PC-3 (cell line): ENCODE measurements at regions of chr10 and their contacts with region 1.

Region 1: DNA sequence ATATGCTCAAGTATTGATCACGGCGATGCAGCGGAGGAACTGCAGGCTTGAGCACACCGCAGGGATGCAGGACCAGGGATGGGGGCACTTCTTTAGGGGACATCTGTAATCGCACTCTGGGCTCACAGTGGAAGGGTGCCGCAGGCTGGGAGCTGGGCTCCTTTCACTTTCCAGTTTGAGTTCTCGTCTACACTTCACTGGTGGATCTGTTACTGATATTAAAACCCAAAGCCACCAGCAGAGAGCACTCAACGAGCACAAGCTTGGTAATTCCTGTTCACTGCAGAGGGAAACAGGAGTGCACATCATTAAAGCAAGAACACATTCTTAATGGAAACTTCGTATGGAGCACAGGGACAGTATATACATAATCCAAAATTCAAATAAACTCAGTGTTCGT is 91.3 kb downstream of the PARD3 start:
- DNase-seq: peak; percentile 96
- ATAC-seq: peak; percentile 70
- H3K4me3 ChIP-seq: peak overlapping the region; percentile 38
- H3K27ac ChIP-seq: no peak overlapping the region
- H3K4me1 ChIP-seq: peaks cover 52% of the 10 kb centered on the region
- H3K27me3 ChIP-seq: no peaks in the 10 kb centered on the region
- CTCF ChIP-seq: peak; percentile 99

Region 2: DNA sequence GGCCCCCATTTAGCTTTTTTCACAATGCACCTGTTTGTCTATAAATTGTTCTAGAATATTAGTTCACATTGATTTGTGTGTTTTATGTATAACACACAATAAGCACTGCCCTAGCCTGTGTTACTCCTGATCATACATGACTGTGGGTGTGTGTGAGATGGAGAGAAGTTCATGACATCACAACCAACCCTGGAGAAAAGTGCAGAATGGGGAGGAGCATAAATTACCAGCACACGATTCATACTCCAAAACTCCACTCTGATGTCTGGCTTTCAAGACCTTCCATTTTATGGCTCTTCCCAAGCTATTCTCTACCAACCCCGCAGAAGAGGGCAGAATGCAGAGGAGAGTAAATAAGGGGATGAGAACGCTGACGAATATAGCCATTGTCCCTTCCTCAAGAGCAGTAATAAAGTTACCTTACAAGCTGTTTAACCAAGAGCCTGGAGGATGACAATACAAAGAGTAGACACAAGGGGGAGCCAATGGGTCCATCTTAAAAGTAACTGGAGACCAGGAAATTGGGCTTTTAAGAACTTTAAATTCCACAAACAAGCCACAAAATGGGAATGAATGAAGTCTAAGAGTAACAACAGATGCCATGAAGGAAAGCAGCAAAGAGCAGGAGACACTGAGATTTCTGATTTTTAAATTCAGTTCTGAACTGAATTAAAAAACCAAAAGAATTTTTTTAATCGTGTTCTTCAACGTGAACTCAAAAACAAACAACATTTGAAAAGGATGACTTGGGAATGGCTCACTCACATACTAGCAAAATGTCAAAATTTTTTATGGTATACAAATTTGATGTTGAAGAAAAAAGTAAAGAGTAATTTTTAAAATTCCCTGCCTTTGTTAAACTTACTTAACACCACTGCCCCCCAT is 68.2 kb before region 1 on chr10:
- CTCF ChIA-PET with region 1: interaction called, 12 read pairs
- POLR2A ChIA-PET with region 1: no interaction called
- intact Hi-C with region 1: no loop called
- DNase-seq: peak; percentile 100
- ATAC-seq: peak; percentile 78
- H3K4me3 ChIP-seq: no peak overlapping the region
- H3K27ac ChIP-seq: no peak overlapping the region
- H3K4me1 ChIP-seq: peaks cover 9% of the 10 kb centered on the region; the same call in 1 of the 2 replicates
- H3K27me3 ChIP-seq: no peaks in the 10 kb centered on the region
- CTCF ChIP-seq: peak; percentile 100

Region 3: GRCh38 chr10:34696423-34696822 is 27.3 kb before region 1 on chr10:
- CTCF ChIA-PET with region 1: interaction called, 3 read pairs
- POLR2A ChIA-PET with region 1: interaction called, 5 read pairs
- intact Hi-C with region 1: loop called (anchors 1 kb)
- DNase-seq: peak; percentile 99
- ATAC-seq: peak; percentile 74
- H3K4me3 ChIP-seq: no peak overlapping the region
- H3K27ac ChIP-seq: peak overlapping the region; percentile 0; the same call in 1 of the 2 replicates
- H3K4me1 ChIP-seq: peaks cover 57% of the 10 kb centered on the region
- H3K27me3 ChIP-seq: no peaks in the 10 kb centered on the region
- CTCF ChIP-seq: no peak

Region 4: DNA sequence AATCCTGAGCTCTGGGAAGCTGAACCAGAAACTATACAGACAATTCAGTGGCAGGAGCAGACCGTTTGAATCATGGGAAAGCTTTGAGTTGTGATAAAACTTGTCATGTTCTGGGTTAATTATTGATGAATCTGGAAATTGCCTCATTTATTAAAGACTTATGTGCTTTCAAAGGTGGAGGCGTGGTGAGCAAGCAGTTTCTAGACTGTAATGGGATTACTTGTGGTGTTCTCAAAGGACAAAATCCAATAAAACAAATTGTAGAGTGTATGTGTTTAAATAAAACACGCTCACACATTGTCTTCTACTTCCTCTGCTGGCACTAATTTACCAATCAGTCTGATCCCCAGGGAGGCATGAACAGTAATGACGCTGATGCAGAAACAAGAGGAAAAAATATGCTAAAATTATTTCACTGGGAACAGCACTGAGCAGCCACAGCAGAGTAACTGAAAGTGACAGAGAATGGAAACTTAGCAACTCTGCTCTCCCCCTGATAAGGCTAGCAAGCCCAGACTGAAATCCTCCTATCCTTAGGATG is 66.3 kb after region 1 on chr10:
- CTCF ChIA-PET with region 1: no interaction called
- POLR2A ChIA-PET with region 1: no interaction called
- intact Hi-C with region 1: loop called (anchors 2 kb)
- DNase-seq: no peak
- ATAC-seq: peak; percentile 25
- H3K4me3 ChIP-seq: no peak overlapping the region
- H3K27ac ChIP-seq: no peak overlapping the region
- H3K4me1 ChIP-seq: peaks cover 8% of the 10 kb centered on the region; the same call in 1 of the 2 replicates
- H3K27me3 ChIP-seq: no peaks in the 10 kb centered on the region
- CTCF ChIP-seq: no peak

Region 5: GRCh38 chr10:34861293-34862021 is 137.7 kb after region 1 on chr10:
- CTCF ChIA-PET with region 1: interaction called, 4 read pairs
- POLR2A ChIA-PET with region 1: no interaction called
- intact Hi-C with region 1: loop called (anchors 2 kb)
- DNase-seq: peak; percentile 98
- ATAC-seq: peak; percentile 98
- H3K4me3 ChIP-seq: no peak overlapping the region; the same call in 1 of the 2 replicates
- H3K27ac ChIP-seq: peak overlapping the region; percentile 3; the same call in 1 of the 2 replicates
- H3K4me1 ChIP-seq: peaks cover 27% of the 10 kb centered on the region
- H3K27me3 ChIP-seq: no peaks in the 10 kb centered on the region
- CTCF ChIP-seq: no peak

Region 6: DNA sequence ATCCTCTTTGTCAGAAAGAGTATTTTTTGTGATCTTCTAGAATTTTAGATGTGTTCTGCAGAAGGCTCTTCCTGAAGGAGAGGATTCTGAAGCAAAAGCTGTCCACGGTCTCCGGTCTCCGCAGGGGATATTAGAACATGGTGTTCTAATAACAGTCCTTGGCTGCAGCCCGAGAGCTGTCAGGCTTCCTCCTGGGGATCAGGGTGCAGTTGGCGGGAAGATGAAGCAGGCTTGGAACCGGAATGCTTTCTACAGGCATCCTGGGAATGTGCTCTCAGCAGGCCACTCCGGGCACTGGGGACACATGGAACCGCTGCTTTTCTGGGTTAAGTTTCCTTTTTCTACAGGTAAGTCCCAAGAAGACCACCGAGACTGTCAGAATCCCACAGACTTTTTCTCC is 209.9 kb after region 1 on chr10:
- CTCF ChIA-PET with region 1: interaction called, 17 read pairs
- POLR2A ChIA-PET with region 1: no interaction called
- intact Hi-C with region 1: no loop called
- DNase-seq: no peak
- ATAC-seq: no peak
- H3K4me3 ChIP-seq: no peak overlapping the region
- H3K27ac ChIP-seq: no peak overlapping the region
- H3K4me1 ChIP-seq: peaks cover 8% of the 10 kb centered on the region
- H3K27me3 ChIP-seq: no peaks in the 10 kb centered on the region
- CTCF ChIP-seq: no peak